HepG2 (cell line): ENCODE measurements at regions of chr2 and their contacts with region 1.

Region 1: GRCh38 chr2:25201265-25201664 is 32.9 kb upstream of the POMC start:
- DNase-seq: no peak
- ATAC-seq: peak; percentile 85
- H3K4me3 ChIP-seq: no peak overlapping the region
- H3K27ac ChIP-seq: no peak overlapping the region
- H3K4me1 ChIP-seq: peaks cover 14% of the 10 kb centered on the region
- H3K27me3 ChIP-seq: peaks cover 3 to 9% of the 10 kb centered on the region in 2 experiments; a peak in 3 of 5 replicates
- CTCF ChIP-seq: peak; percentile 20; the same call in 1 of the 2 replicates
- EP300 ChIP-seq: no peak
- POLR2A ChIP-seq: no peak
- RAD21 ChIP-seq: no peak

Region 2: DNA sequence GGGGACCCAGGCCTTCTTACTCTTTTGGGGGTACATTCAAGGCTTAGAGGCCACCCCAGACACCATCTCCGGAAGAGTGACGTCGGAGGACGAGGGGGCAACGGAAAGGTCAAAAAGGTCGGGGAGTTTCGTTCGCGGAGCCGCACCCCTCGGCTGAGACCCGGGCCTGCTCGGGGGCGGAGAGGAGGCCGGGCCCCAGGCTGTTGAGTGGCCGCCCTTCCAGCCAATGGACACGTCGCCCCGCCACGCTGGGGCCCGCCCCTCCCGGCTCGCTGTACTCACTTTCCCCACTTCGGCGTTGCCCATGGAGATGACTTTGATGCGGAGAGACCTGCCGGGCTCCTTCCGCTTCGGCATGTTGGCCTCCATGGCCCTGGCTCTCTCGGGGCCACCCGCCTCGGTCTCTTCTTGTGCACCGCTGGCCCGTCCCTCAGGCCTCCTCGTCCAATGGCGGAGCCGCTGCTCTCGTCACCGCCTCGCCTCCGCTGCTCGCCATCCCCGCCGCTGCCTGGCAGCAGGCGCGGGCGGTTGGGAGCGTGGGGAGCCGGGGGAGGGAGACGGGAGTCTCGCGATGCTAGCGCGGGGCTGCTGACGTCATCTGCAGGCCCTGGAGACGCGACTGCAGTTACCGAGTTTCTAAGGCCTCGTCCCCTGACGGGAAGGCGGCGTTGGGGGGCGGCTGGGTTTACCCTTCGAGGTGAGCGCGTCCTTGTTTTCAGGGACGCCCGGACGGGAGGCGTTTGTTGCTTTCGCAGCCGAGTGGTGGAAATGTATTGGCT is 229.5 kb before region 1 on chr2 and contains the start of gene DNAJC27:
- CTCF ChIA-PET with region 1: interaction called, 8 read pairs
- POLR2A ChIA-PET with region 1: no interaction called
- in situ Hi-C with region 1: loop called (anchors 5 kb)
- intact Hi-C with region 1: loop called (anchors 2 kb)
- DNase-seq: peak; percentile 95
- ATAC-seq: peak; percentile 97
- H3K4me3 ChIP-seq: peak within 1 kb of the TSS; percentile 80 to 90 (median 88)
- H3K27ac ChIP-seq: peak within 1 kb of the TSS; percentile 95
- H3K4me1 ChIP-seq: peaks cover 23% of the 10 kb centered on the region
- H3K27me3 ChIP-seq: no peaks in the 10 kb centered on the region; a peak in 1 of 5 replicates
- CTCF ChIP-seq: peak; percentile 20; the same call in 1 of the 2 replicates
- EP300 ChIP-seq: 0 out of 4 replicates have a peak, but pooled peaks of 1 of the 2 experiments have one; percentile 9
- POLR2A ChIP-seq: peak; percentile 95
- RAD21 ChIP-seq: peak; percentile 13; the same call in 1 of the 2 replicates
- total RNA-seq, gene DNAJC27: 2.3 and 3.1 TPM in 2 replicates

Region 3: DNA sequence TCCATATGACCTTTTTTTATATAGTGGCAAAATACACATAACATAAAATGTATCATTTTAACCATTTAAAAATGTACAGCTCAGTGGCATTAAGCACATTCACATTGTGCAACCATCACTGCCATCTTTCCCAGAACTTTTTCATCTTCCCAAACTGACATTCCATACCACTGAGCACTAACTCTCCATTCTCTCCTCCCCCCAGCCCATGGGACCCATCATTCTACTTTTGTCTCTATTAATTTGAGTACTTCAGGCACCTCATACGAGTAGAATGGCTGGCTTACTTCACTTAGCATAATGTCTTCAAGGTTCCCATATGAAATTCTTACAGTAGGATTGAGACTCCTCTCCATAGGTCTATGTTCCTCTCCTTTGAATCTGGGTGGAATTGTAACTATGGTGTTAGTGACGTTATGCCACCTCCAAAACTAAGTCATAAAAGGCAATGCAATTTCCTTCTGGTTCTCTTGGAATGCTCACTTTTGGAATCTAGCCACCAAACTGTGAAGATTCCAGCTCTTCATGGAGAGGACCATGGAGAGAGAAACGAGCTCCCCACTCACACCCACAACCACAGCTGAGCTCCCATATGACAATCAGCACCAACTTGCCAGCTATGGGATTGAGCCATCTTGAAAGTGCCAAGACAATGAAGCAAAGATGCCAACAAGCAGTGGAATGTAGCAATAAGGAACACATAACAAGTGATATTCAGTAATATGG is 219.7 kb before region 1 on chr2:
- CTCF ChIA-PET with region 1: no interaction called
- POLR2A ChIA-PET with region 1: no interaction called
- in situ Hi-C with region 1: loop called (anchors 5 kb)
- intact Hi-C with region 1: no loop called
- DNase-seq: no peak
- ATAC-seq: no peak
- H3K4me3 ChIP-seq: no peak overlapping the region
- H3K27ac ChIP-seq: no peak overlapping the region
- H3K4me1 ChIP-seq: peaks cover 38% of the 10 kb centered on the region
- H3K27me3 ChIP-seq: peaks cover 0 to 5% of the 10 kb centered on the region in 2 experiments; a peak in 2 of 5 replicates
- CTCF ChIP-seq: no peak
- EP300 ChIP-seq: no peak
- POLR2A ChIP-seq: no peak
- RAD21 ChIP-seq: no peak

Region 4: DNA sequence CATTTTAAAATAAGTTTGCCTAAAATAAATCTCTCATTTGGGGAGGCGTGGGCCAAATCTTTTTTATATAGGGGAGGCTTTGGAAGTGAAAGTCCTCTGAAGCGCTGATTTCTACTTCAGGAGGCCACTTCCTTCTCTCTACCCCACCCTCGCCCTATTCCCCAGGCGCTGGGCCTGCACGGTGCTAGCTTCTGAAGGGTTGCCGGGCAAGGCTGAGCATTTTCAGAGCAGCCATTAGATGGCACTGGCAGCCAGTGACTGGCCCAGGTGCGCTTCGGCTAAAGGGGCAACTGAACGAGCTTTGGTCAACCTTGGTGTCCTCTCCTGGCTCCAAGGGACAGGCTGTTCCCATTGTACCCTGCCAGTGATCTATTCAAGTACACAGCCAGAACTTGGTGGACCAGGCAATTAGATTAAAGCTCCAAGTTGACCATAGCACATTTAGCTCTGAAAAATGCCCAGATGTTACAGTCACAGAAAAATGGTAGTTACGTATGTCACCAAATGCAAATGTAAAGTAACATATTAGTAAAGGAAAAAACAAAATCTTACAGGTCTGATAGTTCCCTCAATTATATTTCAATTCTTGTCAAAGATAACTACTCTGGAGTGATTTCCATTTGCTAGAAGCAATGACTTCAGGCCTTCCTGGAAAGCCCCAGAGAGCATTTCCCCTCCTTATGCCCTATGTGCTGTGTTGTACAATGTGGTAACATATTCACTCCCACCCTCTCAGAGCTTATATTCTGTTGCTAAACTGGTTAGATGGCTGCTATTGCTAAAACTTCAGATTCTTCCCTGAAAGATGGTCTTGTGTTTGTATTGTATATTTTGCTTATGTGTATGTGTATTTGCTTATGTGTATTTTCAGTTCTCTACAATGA is 35.0 kb before region 1 on chr2:
- CTCF ChIA-PET with region 1: interaction called, 6 read pairs
- POLR2A ChIA-PET with region 1: no interaction called
- in situ Hi-C with region 1: no loop called
- intact Hi-C with region 1: loop called (anchors 1 kb)
- DNase-seq: peak; percentile 39
- ATAC-seq: peak; percentile 87
- H3K4me3 ChIP-seq: no peak overlapping the region
- H3K27ac ChIP-seq: no peak overlapping the region
- H3K4me1 ChIP-seq: peaks cover 8% of the 10 kb centered on the region; the same call in 1 of the 2 replicates
- H3K27me3 ChIP-seq: peaks cover 10 to 64% of the 10 kb centered on the region in 2 experiments
- CTCF ChIP-seq: peak; percentile 87
- EP300 ChIP-seq: no peak
- POLR2A ChIP-seq: no peak
- RAD21 ChIP-seq: peak; percentile 72

Region 5: GRCh38 chr2:25228848-25229278 is 27.6 kb after region 1 on chr2:
- CTCF ChIA-PET with region 1: no interaction called
- POLR2A ChIA-PET with region 1: no interaction called
- in situ Hi-C with region 1: no loop called
- intact Hi-C with region 1: loop called (anchors 1 kb)
- DNase-seq: peak; percentile 78
- ATAC-seq: peak; percentile 91
- H3K4me3 ChIP-seq: no peak overlapping the region
- H3K27ac ChIP-seq: no peak overlapping the region
- H3K4me1 ChIP-seq: peaks cover 7% of the 10 kb centered on the region; the same call in 1 of the 2 replicates
- H3K27me3 ChIP-seq: 0 out of 5 replicates have a peak, but pooled peaks cover 0 to 1% of the 10 kb centered on the region in 2 experiments
- CTCF ChIP-seq: peak; percentile 81
- EP300 ChIP-seq: no peak
- POLR2A ChIP-seq: no peak
- RAD21 ChIP-seq: peak; percentile 56

Region 6: GRCh38 chr2:25342372-25343186 is 141.3 kb after region 1 on chr2:
- CTCF ChIA-PET with region 1: no interaction called
- POLR2A ChIA-PET with region 1: no interaction called
- in situ Hi-C with region 1: no loop called
- intact Hi-C with region 1: no loop called
- DNase-seq: peak; percentile 78
- ATAC-seq: peak; percentile 91
- H3K4me3 ChIP-seq: peak overlapping the region; percentile 64 to 81 (median 71); a peak in 5 of 6 replicates
- H3K27ac ChIP-seq: no peak overlapping the region
- H3K4me1 ChIP-seq: peaks cover 26% of the 10 kb centered on the region
- H3K27me3 ChIP-seq: peaks cover 0 to 27% of the 10 kb centered on the region in 2 experiments; a peak in 2 of 5 replicates
- CTCF ChIP-seq: peak; percentile 96
- EP300 ChIP-seq: peak in 1 of 2 experiments; percentile 12; a peak in 1 of 4 replicates
- POLR2A ChIP-seq: no peak
- RAD21 ChIP-seq: peak; percentile 98